Activated CD4-positive, alpha-beta T cell treated with anti-CD3 and anti-CD28 coated beads, Interleukin-2, amount 10 ng/mL, durations not matched to agents 24 days and 14 days (primary cell): ENCODE measurements at regions of chr14 and their contacts with region 1.

Region 1: GRCh38 chr14:21414137-21414631 is 30.4 kb upstream of the SUPT16H start:
- DNase-seq: no peak
- H3K4me3 Mint-ChIP-seq: peak overlapping the region; percentile 11
- H3K27ac Mint-ChIP-seq: peak overlapping the region; percentile 86
- H3K4me1 Mint-ChIP-seq: peaks cover 14% of the 10 kb centered on the region
- H3K27me3 Mint-ChIP-seq: no peaks in the 10 kb centered on the region

Region 2: DNA sequence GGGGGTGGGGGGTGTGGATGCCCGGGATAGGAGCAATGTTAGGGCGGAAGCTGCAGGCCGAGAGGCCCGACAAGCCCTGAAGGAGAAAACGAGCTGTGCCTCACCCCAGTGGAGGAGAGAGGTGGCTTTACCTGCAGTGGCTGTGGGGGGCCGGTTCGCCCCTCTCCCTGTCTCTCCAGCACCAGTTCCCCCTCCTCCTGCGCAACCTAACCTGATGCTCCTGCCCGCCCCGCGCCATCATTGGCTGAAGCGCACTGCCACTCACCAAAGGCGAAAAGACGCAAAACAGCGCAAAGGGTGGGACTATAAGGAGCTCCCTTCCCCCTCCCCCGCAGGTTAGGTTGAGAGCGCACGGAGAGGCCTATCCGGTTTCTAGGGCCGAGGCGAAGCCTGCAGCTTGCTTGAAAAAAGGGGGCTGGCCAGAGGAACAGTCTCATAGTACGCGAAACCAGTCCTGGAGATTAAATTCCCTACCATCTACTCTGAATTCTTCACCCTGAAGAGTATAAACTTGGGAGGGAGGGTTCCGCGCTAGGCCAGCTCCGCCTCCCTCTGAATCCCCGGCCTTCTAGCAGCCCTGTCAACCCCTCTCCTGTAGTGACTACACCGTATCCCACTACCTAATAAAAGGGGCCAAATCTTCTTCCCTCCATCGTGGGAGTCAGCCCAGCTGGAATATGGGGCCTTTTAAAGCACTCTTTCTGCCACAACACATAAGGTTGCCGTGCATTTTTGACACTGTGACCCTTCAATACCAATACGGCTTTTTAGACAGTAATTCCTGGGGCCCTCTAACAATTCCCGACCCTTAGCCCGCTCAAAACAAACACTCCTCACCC is 23.1 kb after region 1 on chr14:
- intact Hi-C with region 1: loop called (anchors 1 kb)
- DNase-seq: peak; percentile 100
- H3K4me3 Mint-ChIP-seq: peak overlapping the region; percentile 90
- H3K27ac Mint-ChIP-seq: peak overlapping the region; percentile 77
- H3K4me1 Mint-ChIP-seq: peaks cover 50% of the 10 kb centered on the region
- H3K27me3 Mint-ChIP-seq: no peaks in the 10 kb centered on the region

Region 3: DNA sequence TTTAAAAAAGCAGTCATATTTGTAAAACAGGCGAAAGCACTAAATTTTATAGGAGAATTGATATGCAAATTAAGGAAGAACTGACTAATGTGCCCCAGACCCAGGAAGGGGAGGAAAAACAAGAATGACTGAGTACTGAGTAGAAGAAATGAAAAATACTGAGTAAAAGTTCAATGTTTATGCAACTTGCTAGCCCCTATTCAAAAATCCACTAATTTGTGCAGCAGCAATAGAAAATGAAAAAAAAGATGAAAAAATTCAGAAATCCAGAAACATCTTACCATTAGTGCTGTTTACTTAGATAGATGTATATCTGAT is 35.7 kb after region 1 on chr14:
- intact Hi-C with region 1: loop called (anchors 1 kb)
- DNase-seq: no peak
- H3K4me3 Mint-ChIP-seq: peak overlapping the region; percentile 59
- H3K27ac Mint-ChIP-seq: peak overlapping the region; percentile 84
- H3K4me1 Mint-ChIP-seq: peaks cover 44% of the 10 kb centered on the region
- H3K27me3 Mint-ChIP-seq: no peaks in the 10 kb centered on the region

Region 4: GRCh38 chr14:21536418-21537089 is 122.4 kb after region 1 on chr14:
- intact Hi-C with region 1: no loop called
- DNase-seq: no peak
- H3K4me3 Mint-ChIP-seq: no peak overlapping the region
- H3K27ac Mint-ChIP-seq: no peak overlapping the region
- H3K4me1 Mint-ChIP-seq: peaks cover 5% of the 10 kb centered on the region
- H3K27me3 Mint-ChIP-seq: peaks cover 55% of the 10 kb centered on the region

Region 5: DNA sequence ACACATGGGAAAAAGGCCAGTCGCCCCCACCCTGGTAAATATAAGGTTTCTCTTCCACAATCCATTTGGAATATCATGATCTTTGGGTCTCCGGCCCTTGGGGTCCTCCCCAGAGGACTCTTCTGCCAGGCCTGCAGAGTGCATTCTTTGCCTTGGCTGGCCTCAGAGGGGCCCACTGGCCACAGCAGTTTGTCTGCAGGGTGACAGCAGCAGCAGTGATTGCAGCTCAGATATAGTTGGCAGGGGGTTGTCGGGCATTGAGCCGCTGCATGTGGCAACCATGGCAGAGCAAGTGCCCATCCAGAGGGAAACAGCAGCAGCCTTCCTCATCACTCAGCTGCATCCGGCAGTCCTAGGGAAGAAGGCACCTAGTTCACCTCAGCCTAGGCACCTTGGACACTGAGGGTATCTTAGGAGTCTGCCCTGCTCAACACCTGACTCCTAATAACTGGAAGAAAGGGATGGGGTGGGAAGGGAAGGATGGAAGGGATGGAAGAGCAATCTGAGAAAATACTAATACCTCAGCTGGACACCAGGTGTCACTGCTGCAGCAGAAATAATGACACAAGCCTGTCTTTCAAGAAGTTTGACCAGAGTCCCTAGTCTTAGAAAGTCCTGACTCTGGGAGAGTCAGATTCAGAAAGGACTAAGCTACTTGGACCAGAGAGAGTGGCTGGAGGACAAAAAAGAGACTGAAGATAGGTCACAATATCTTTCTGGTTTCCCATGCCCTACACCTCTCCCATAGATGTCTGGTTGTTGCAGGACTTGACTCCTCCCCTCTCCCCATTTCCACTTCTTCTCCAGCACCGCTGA is 1559.2 kb after region 1 on chr14:
- intact Hi-C with region 1: no loop called
- DNase-seq: peak; percentile 84
- H3K4me3 Mint-ChIP-seq: no peak overlapping the region
- H3K27ac Mint-ChIP-seq: no peak overlapping the region
- H3K4me1 Mint-ChIP-seq: no peaks in the 10 kb centered on the region
- H3K27me3 Mint-ChIP-seq: peaks cover 11% of the 10 kb centered on the region